ENCODE measurements at regions of chr5 and their contacts with region 1.

Region 1: DNA sequence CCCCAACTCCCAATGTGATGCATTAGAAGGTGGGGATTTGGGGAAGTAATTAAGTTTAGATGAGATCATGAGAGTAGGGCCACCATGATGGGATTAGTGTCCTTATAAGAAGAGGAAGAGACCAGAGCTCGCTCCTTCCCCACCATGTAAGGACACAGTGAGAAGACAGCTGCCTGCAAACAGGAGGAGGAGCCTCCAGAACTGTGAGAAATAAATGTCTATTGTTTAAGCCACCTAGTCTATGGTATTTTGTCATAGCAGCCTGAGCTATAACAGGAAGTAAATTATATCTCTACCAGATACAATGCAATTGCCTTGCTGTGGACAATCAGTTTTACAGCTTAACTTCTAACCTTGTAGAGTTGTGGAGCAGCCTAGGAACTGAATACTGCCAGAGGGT is 58.0 kb downstream of the ANKRD33B start:
- DNase-seq: no peak
- ATAC-seq: no peak
- H3K4me3 Mint-ChIP-seq: no peak overlapping the region
- H3K27ac Mint-ChIP-seq: no peak overlapping the region
- H3K4me1 Mint-ChIP-seq: peaks cover 48% of the 10 kb centered on the region
- H3K27me3 Mint-ChIP-seq: no peaks in the 10 kb centered on the region
- CTCF ChIP-seq: no peak

Region 2: GRCh38 chr5:10552183-10553143 is 69.4 kb before region 1 on chr5:
- CTCF ChIA-PET with region 1: no interaction called
- POLR2A ChIA-PET with region 1: no interaction called
- intact Hi-C with region 1: no loop called
- DNase-seq: no peak
- ATAC-seq: peak; percentile 87
- H3K4me3 Mint-ChIP-seq: peak overlapping the region; percentile 15
- H3K27ac Mint-ChIP-seq: peak overlapping the region; percentile 46
- H3K4me1 Mint-ChIP-seq: peaks cover 48% of the 10 kb centered on the region
- H3K27me3 Mint-ChIP-seq: no peaks in the 10 kb centered on the region
- CTCF ChIP-seq: no peak

Region 3: GRCh38 chr5:10607666-10608073 is 14.2 kb before region 1 on chr5:
- CTCF ChIA-PET with region 1: interaction called, 30 read pairs
- POLR2A ChIA-PET with region 1: interaction called, 54 read pairs
- intact Hi-C with region 1: no loop called
- DNase-seq: no peak
- ATAC-seq: peak; percentile 35
- H3K4me3 Mint-ChIP-seq: peak overlapping the region; percentile 80
- H3K27ac Mint-ChIP-seq: peak overlapping the region; percentile 90
- H3K4me1 Mint-ChIP-seq: peaks cover 67% of the 10 kb centered on the region
- H3K27me3 Mint-ChIP-seq: no peaks in the 10 kb centered on the region
- CTCF ChIP-seq: no peak